ENCODE measurements at regions of chr20 and their contacts with region 1.

Region 1: DNA sequence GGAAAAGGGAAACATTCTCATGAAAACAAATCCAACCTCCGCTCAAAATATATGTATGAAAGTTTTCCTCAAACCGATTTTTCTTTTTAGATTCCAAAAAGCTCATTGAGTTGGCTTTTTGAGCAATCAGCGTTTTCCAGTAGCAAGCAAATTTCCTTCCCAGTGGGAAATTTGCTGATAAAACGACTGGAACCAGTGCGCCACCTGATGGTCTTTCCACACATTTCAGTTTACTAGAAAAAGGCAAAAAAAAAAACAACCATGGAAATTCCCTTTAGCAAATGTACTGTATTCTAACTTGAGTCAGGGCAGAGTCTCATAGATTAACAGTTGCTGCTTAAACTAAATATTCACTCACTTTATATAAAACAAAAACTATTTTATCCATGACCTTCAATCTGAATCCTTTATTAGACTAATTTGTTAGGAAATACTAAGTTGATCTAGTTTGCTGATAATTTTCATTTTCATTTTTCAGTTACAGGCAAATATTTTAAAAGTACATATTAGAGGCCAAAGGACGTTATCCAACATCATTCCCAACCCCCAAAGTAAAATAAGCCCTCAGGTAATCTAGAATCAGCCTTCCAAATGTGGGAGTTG is 271.5 kb downstream of the FOXA2 start:
- DNase-seq: peak in 1 of 2 experiments; percentile 25
- H3K4me3 ChIP-seq: no peak overlapping the region
- H3K27ac ChIP-seq: no peak overlapping the region
- H3K4me1 ChIP-seq: no peaks in the 10 kb centered on the region
- H3K27me3 ChIP-seq: peaks cover 57% of the 10 kb centered on the region
- CTCF ChIP-seq: peak; percentile 74

Region 2: DNA sequence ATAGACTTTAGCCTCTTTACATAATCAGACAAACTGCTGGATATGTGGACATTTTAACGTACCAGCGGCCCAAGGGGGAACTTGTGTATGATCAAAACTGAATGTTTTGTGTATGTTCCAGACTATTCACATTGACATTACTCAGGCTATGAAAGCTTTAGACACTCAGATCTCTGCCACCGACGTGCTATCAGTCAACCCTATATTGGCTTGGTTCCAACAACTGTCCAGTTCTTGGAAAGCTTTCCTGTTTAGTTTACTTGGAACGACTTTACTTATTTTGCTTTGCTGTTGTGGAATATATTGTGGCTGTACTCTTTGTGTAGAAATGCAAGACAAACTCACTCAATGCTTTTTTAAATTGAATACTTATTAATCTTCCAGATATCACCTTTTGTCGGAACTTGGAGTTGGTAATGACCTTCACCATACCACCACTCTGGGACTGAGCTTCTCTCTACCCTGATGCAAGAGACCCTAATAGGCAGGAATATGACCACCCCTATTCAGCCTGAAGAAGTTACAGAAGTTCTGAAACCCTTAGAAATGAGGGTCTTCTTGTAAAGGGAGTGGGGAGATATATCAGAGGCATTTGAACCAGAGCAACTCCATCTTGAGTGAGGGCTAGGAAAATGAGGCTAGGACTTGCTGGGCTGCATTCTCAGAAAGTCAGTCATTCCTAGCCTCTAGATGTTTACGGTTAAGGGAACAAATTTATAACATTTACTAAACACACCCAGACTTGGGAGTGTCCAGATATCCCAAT is 656.4 kb before region 1 on chr20:
- CTCF ChIA-PET with region 1: interaction called, 24 read pairs
- POLR2A ChIA-PET with region 1: no interaction called
- intact Hi-C with region 1: no loop called
- DNase-seq: no peak
- H3K4me3 ChIP-seq: no peak overlapping the region
- H3K27ac ChIP-seq: no peak overlapping the region
- H3K4me1 ChIP-seq: no peaks in the 10 kb centered on the region
- H3K27me3 ChIP-seq: peaks cover 56% of the 10 kb centered on the region
- CTCF ChIP-seq: no peak

Region 3: DNA sequence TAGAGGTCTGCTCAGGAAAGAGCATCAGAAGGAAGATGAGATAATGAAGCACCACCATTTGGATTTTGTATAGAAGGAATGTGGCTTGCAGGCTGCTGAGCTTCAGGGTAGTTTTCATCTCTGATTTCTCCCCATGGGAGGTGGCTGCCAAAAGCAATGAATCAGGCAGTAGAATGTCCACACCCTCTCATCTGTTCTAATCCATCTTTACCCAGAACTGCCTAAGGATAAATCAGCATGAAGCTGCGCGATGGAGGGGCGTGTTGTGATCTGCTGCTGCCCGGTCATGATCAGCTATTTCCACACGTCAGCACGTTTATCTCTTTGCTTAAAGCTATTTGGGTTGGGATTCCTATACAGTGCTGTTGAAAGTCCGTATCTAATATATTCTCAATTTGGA is 23.9 kb before region 1 on chr20:
- CTCF ChIA-PET with region 1: no interaction called
- POLR2A ChIA-PET with region 1: no interaction called
- intact Hi-C with region 1: no loop called
- DNase-seq: no peak
- H3K4me3 ChIP-seq: no peak overlapping the region
- H3K27ac ChIP-seq: no peak overlapping the region
- H3K4me1 ChIP-seq: no peaks in the 10 kb centered on the region
- H3K27me3 ChIP-seq: peaks cover 48% of the 10 kb centered on the region
- CTCF ChIP-seq: no peak

Measured in PC-9 (cell line).